ENCODE measurements at regions of chr11 and their contacts with region 1.

Region 1: GRCh38 chr11:10307442-10308207 is 2.8 kb downstream of the ADM start:
- DNase-seq: peak; percentile 83
- H3K4me3 ChIP-seq: peak overlapping the region; percentile 62
- H3K27ac ChIP-seq: peak overlapping the region; percentile 93
- H3K4me1 ChIP-seq: peaks cover 97% of the 10 kb centered on the region
- CTCF ChIP-seq: peak; percentile 99

Region 2: GRCh38 chr11:9972989-9973388 is 334.6 kb before region 1 on chr11:
- CTCF ChIA-PET with region 1: no interaction called
- POLR2A ChIA-PET with region 1: no interaction called
- intact Hi-C with region 1: loop called (anchors 2 kb)
- DNase-seq: peak; percentile 73
- H3K4me3 ChIP-seq: no peak overlapping the region
- H3K27ac ChIP-seq: no peak overlapping the region
- H3K4me1 ChIP-seq: no peaks in the 10 kb centered on the region
- CTCF ChIP-seq: peak; percentile 92

Region 3: GRCh38 chr11:10181811-10182210 is 125.8 kb before region 1 on chr11:
- CTCF ChIA-PET with region 1: no interaction called
- POLR2A ChIA-PET with region 1: no interaction called
- intact Hi-C with region 1: loop called (anchors 1 kb)
- DNase-seq: peak; percentile 35
- H3K4me3 ChIP-seq: no peak overlapping the region
- H3K27ac ChIP-seq: no peak overlapping the region
- H3K4me1 ChIP-seq: no peaks in the 10 kb centered on the region
- CTCF ChIP-seq: peak; percentile 73

Measured in OCI-LY7 (cell line).